ENCODE measurements at regions of chr20 and their contacts with region 1.

Region 1: DNA sequence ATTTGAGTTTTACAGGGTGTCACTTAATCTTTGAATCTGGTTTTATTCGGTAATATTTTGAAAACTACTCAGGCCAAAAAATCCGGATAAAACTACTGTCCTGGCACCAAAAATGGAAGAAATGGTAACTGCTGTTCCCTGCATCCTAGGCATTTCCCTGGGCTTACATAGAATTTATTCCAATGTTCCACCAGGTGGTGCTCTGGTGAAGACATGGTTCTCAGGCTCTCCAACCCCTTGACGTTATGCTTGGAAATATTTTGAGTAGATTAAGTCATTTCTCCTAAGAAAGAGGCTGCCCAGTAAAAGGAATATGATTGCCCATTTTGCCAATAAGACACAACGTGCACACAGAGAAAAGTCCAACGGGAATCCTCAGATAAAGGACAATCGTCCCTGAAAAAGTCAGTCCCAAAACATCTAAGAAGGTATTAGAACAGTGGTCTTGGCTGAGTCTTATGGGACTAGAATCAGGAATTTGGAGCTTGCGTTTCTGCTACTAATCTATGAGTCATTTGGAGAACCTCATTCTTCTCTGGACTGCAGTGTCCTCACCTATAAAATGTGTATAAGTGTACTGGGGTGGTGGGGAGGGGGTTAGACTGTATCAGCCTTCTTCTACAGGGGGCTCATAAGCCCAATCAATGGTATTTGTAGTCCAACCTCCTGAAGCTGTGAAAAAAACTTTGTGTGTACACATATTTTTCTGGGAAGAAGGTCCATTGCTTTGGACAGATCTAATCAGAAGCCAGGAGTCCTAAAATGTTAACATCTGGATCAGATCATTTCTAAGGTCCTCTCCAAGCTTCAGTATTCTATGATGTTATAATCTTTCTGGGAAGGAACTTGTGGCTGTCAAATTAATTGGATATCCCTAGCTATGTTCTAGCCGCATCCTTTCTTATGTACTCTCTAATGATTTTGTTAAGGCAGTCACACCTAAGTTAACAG is 131.0 kb upstream of the BMP2 start:
- DNase-seq: peak in 6 of 7 donors; percentile 27 to 53 (median 36)
- H3K4me3 ChIP-seq: no peak overlapping the region
- H3K27ac ChIP-seq: no peak overlapping the region
- H3K4me1 ChIP-seq: peaks cover 0 to 15% of the 10 kb centered on the region in 2 donors
- H3K27me3 ChIP-seq: no peaks in the 10 kb centered on the region
- CTCF ChIP-seq: peak; percentile 37 to 65 (median 52)
- POLR2A ChIP-seq: no peak

Region 2: DNA sequence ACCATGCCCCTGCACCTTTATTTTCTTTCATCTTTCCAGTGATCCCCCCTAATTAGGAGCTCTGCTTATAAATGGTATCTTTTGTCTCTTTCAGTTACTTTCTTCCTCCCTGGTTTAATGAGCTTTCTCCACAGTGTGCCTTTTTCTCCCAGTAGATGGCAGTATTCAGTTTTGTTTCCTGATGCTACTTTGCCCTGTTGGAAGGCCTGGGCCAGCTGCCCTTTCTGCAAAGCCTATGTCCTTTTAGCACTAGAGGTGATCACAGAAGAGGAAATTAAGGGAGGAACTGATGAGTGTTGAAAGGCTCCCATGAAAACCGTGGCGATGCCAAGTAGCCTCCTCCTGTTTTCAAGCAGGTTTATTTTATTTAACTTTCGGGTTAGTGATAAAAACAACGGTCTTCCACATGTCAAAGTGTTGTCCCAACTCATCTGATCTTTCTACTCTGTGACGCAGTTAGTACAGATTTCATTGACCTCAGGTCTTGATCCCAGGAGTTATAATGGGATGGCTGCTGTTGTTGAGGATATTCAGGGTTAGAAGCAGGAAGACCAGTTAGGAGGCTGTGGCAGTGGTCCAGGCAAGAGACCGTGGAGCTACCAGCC is 53.2 kb before region 1 on chr20:
- intact Hi-C with region 1: no loop called
- DNase-seq: peak; percentile 30 to 66 (median 61)
- H3K4me3 ChIP-seq: no peak overlapping the region
- H3K27ac ChIP-seq: no peak overlapping the region
- H3K4me1 ChIP-seq: no peaks in the 10 kb centered on the region
- H3K27me3 ChIP-seq: no peaks in the 10 kb centered on the region
- CTCF ChIP-seq: peak; percentile 52 to 72 (median 68)
- POLR2A ChIP-seq: no peak

Region 3: GRCh38 chr20:6692568-6693173 is 56.2 kb after region 1 on chr20:
- intact Hi-C with region 1: no loop called
- DNase-seq: peak in 1 of 7 donors; percentile 22
- H3K4me3 ChIP-seq: no peak overlapping the region
- H3K27ac ChIP-seq: no peak overlapping the region
- H3K4me1 ChIP-seq: no peaks in the 10 kb centered on the region
- H3K27me3 ChIP-seq: no peaks in the 10 kb centered on the region
- CTCF ChIP-seq: no peak
- POLR2A ChIP-seq: no peak

Region 4: DNA sequence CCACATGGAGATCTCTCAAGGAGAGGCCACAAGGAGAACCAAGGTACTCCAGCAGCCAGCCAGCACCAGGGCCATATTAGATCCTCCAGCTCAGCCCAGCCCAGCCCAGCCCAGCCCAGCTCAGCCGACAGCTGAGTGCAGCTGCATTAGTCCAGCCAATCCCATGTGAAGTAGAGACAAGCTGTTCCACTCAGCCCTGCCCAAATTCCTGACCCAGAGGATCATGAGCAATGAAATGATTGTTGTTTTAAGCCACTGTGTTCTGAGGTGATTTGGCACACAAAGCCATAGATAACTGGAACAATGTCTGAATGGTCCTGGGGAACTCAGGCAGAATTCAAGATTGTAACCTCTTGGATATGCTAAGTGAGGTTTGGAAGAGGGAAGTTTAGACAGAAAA is 71.5 kb after region 1 on chr20:
- intact Hi-C with region 1: loop called in 1 of 2 experiments (anchors 10 kb)
- DNase-seq: peak in 5 of 7 donors; percentile 7 to 57 (median 29)
- H3K4me3 ChIP-seq: no peak overlapping the region
- H3K27ac ChIP-seq: no peak overlapping the region
- H3K4me1 ChIP-seq: no peaks in the 10 kb centered on the region
- H3K27me3 ChIP-seq: no peaks in the 10 kb centered on the region
- CTCF ChIP-seq: no peak
- POLR2A ChIP-seq: no peak

Region 5: GRCh38 chr20:6767536-6768227 is 131.2 kb after region 1 on chr20 and contains the start of gene BMP2:
- intact Hi-C with region 1: loop called in 1 of 2 experiments (anchors 10 kb)
- DNase-seq: peak in 6 of 7 donors; percentile 19 to 48 (median 27)
- H3K4me3 ChIP-seq: peak within 1 kb of the TSS in 3 of 4 donors; percentile 4 to 56 (median 55)
- H3K27ac ChIP-seq: peak within 1 kb of the TSS in 3 of 5 donors; percentile 26 to 77 (median 41)
- H3K4me1 ChIP-seq: peaks cover 0 to 10% of the 10 kb centered on the region in 2 donors
- H3K27me3 ChIP-seq: peaks cover 8% of the 10 kb centered on the region
- CTCF ChIP-seq: no peak
- POLR2A ChIP-seq: no peak
- total RNA-seq, gene BMP2: 1.6 to 5.6 (median 2.3) TPM